ENCODE measurements at regions of chr12 and their contacts with region 1.

Region 1: GRCh38 chr12:113310489-113310888 is 24.4 kb downstream of the SLC8B1 start:
- DNase-seq: no peak
- ATAC-seq: no peak
- H3K4me3 ChIP-seq: no peak overlapping the region
- H3K27ac ChIP-seq: no peak overlapping the region
- H3K4me1 ChIP-seq: no peaks in the 10 kb centered on the region
- H3K27me3 ChIP-seq: no peaks in the 10 kb centered on the region
- CTCF ChIP-seq: no peak
- POLR2A ChIP-seq: no peak

Region 2: DNA sequence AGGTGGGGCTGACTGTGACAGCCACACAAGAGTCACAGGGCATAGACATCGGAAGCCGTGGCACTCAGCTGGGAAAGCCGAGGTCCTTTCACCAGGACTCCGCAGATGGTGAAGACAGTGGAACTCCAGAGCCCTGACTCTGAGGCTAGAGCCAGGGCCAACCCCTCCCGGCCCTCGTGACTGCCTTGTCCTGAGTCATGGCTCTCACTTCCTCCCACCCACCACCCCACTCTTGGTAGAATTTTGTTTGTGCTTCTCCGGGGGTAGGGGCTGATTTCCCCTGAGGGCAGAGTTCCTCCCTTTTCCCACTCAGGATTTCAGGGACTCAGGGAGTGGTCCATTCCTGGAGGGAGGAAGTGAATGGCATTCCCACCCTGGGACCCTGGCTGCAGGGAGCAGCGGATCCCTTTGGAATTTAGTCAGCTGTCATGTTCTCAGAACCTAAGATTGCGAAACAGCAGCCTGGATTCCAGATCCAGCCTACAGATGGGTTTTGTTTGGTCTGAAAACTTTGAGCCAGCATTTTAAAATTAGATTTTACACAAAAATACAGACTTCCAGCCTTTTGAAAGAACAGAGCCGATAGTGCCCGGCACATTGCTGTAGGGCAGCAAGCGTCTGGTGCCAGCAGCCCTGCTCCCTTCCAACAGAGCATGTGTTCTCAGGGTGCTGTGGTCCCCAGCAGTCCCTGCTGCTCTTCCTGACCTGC is 38.5 kb before region 1 on chr12:
- in situ Hi-C with region 1: no loop called
- intact Hi-C with region 1: no loop called
- DNase-seq: peak; percentile 77 to 87
- ATAC-seq: peak; percentile 87 to 93
- H3K4me3 ChIP-seq: peak overlapping the region in 1 of 4 donors; percentile 19
- H3K27ac ChIP-seq: peak overlapping the region; percentile 71 to 77 (median 76)
- H3K4me1 ChIP-seq: peaks cover 19 to 27% of the 10 kb centered on the region in 2 donors
- H3K27me3 ChIP-seq: no peaks in the 10 kb centered on the region
- CTCF ChIP-seq: no peak
- POLR2A ChIP-seq: peak; percentile 13 to 38

Region 3: GRCh38 chr12:113358381-113359132 is 48.1 kb after region 1 on chr12 and contains the start of gene PLBD2:
- in situ Hi-C with region 1: no loop called
- intact Hi-C with region 1: loop called (anchors 1 kb)
- DNase-seq: peak; percentile 92 to 93
- ATAC-seq: peak; percentile 94 to 95
- H3K4me3 ChIP-seq: peak within 1 kb of the TSS; percentile 66 to 91 (median 80)
- H3K27ac ChIP-seq: peak within 1 kb of the TSS; percentile 85 to 92 (median 90)
- H3K4me1 ChIP-seq: peaks cover 14% of the 10 kb centered on the region in 2 donors
- H3K27me3 ChIP-seq: no peaks in the 10 kb centered on the region
- CTCF ChIP-seq: peak in 1 of 5 experiments; percentile 20
- POLR2A ChIP-seq: peak; percentile 76 to 77
- total RNA-seq, gene PLBD2: 12.0 to 28.9 (median 26.8) TPM

Region 4: DNA sequence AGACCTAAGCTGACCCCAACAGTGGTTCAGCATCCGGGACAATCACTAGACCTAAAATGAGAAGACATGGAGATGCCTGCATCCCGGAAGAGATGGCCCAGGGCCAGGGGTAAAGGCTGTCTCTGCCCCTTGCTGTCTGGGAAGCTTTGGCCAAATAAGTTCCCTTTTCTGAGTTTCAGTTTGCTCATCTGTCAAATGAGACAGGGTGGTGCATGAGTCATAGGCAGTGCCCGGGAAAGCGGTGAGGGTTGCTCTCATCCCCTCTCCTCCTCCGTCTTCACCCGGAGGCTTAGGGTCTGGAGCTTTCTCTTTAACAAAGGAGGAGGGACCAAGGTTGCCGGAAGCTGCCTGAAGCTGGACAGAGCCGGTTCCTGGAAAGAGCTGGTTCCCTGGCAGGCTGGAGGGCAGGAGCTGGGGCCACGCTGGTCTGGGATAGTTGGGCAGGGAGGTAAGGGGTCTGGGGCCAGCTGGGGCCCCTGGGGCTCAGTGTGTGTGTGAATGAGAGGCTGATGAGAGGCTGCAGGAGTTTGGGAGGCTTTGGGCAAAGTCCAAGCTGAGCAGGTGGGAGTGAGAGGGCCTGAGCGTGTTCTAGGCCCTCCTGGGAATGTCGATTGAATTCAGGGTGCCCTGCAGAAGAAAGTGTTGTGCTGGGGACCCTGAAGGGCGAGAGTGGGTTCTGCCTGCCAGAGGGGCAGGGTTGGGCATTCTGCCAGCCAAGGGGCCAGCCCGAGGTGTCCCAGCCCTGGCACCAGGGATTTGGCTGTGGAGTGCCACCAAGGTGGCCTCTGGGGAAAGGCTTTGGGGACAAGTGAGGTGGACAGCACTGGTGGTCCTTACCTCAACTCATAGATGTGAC is 111.8 kb after region 1 on chr12 and contains the start of gene SDSL:
- in situ Hi-C with region 1: loop called in 2 of 4 experiments (anchors 10 to 25 kb)
- intact Hi-C with region 1: loop called (anchors 1 kb)
- DNase-seq: peak; percentile 26 to 52
- ATAC-seq: peak; percentile 60 to 71
- H3K4me3 ChIP-seq: peak within 1 kb of the TSS; percentile 34 to 56 (median 43)
- H3K27ac ChIP-seq: peak within 1 kb of the TSS in 2 of 4 donors; percentile 24 to 48
- H3K4me1 ChIP-seq: peaks cover 0 to 8% of the 10 kb centered on the region in 2 donors
- H3K27me3 ChIP-seq: no peaks in the 10 kb centered on the region
- CTCF ChIP-seq: no peak
- POLR2A ChIP-seq: peak in 1 of 2 donors; percentile 15
- total RNA-seq, gene SDSL: 0.91 to 1.4 (median 0.98) TPM in 3 of 4 donors, not detected in the other

Region 5: DNA sequence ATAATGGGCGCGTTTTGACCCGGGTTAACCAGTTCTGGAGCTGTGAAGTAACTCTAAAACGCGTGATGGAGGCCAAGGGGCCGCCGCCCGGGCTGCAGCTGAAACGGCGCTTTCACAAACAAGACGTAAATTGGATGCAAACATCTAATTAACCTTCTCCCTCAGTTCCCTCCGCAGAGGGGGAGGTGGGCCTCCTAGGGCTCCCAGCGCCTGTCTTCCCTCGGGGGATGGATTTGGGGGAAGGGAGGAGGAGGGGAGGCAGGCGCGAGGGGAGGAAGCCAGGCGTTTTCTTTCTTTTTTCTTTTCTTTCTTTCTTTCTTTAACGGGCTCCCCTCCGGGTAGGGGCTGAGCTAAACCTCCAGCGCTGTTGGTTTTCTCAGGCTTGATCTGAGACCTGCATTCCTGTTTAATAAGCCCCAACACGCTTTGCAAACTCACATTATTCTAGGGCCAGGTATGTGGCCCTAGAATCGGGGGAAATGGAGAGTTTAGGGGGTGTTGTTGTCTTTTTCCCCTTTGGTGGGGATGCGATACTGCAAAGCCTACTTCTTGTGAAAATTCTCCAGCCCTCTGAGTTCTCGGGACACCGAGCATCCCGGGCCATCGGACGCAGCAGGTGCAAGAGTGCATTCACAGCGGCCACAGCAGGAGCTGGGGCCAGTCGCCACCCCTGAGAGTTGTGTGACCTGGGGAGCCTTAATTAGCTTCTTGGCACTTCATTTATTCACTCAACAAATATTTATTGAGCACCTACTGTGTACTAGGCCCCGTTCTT is 204.8 kb after region 1 on chr12:
- in situ Hi-C with region 1: no loop called
- intact Hi-C with region 1: no loop called
- DNase-seq: no peak
- ATAC-seq: no peak
- H3K4me3 ChIP-seq: no peak overlapping the region
- H3K27ac ChIP-seq: no peak overlapping the region
- H3K4me1 ChIP-seq: no peaks in the 10 kb centered on the region
- H3K27me3 ChIP-seq: peaks cover 42 to 62% (median 54%) of the 10 kb centered on the region in 3 donors
- CTCF ChIP-seq: no peak
- POLR2A ChIP-seq: no peak

Region 6: GRCh38 chr12:113912760-113913329 is 602.4 kb after region 1 on chr12:
- in situ Hi-C with region 1: no loop called
- intact Hi-C with region 1: loop called (anchors 5 kb)
- DNase-seq: peak in 1 of 2 donors; percentile 28
- ATAC-seq: peak; percentile 45 to 62
- H3K4me3 ChIP-seq: no peak overlapping the region
- H3K27ac ChIP-seq: no peak overlapping the region
- H3K4me1 ChIP-seq: no peaks in the 10 kb centered on the region
- H3K27me3 ChIP-seq: no peaks in the 10 kb centered on the region
- CTCF ChIP-seq: peak; percentile 55 to 81 (median 69)
- POLR2A ChIP-seq: no peak